ENCODE measurements at regions of chr3 and their contacts with region 1.

Region 1: GRCh38 chr3:15205934-15206661 is at the start of gene CAPN7:
- DNase-seq: peak; percentile 94 to 96 (median 95)
- H3K4me3 ChIP-seq: peak within 1 kb of the TSS; percentile 62
- H3K4me3 Mint-ChIP-seq: peak within 1 kb of the TSS; percentile 86 to 96 (median 93)
- H3K27ac ChIP-seq: peak within 1 kb of the TSS; percentile 93
- H3K27ac Mint-ChIP-seq: peak within 1 kb of the TSS; percentile 91 to 99 (median 96)
- H3K4me1 ChIP-seq: peaks cover 27% of the 10 kb centered on the region
- H3K4me1 Mint-ChIP-seq: peaks cover 38 to 48% (median 47%) of the 10 kb centered on the region in 3 donors
- H3K27me3 ChIP-seq: no peaks in the 10 kb centered on the region
- H3K27me3 Mint-ChIP-seq: peaks cover 0 to 2% of the 10 kb centered on the region in 2 donors
- total RNA-seq, gene CAPN7: 33.1 to 36.1 TPM

Region 2: DNA sequence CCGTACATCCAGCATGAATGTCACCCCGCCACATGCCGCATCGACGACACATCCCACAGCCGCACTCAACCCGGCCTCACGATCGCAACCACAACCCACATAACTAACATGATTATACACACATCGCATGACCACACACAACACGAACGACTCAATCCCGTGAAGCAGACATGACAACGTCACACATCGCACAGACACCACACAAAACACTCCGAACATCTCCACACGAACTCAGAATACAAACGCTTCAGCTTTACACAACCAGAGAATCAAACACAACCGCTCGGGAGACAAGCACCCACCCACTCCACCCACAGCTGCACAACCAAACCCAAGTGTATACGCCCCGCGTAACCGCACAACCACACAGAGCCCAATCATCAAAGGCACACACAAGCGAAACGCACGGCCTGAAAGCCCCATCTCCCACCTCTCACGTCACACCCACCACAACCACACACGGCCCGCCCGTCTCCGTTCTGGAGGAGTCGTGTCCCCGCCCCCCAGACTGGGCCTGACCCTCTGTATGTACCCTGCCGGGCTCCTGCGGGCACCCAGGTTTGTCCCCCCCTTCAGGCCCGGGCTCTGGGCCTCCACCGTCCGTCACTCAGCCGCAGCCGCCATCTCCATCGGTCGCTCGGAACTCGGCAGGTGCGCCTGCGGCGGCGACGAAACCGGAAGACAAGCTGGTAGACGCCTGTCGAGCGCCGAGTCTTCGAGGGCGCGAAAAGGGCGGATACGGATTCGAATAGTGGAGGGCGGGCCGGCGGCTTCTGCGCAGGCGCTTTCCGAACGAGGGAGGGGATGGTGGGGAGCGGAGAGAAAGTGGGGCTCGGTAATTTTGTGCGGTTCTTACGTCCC is 107.4 kb before region 1 on chr3 and contains the start of gene RBSN:
- CTCF ChIA-PET with region 1: no interaction called
- POLR2A ChIA-PET with region 1: interaction called, 11 read pairs
- DNase-seq: peak; percentile 94 to 97 (median 95)
- H3K4me3 ChIP-seq: peak within 1 kb of the TSS; percentile 95
- H3K4me3 Mint-ChIP-seq: peak within 1 kb of the TSS; percentile 91 to 97 (median 95)
- H3K27ac ChIP-seq: peak within 1 kb of the TSS; percentile 98
- H3K27ac Mint-ChIP-seq: peak within 1 kb of the TSS; percentile 91 to 100 (median 98)
- H3K4me1 ChIP-seq: peaks cover 18% of the 10 kb centered on the region
- H3K4me1 Mint-ChIP-seq: peaks cover 23 to 34% (median 30%) of the 10 kb centered on the region in 3 donors
- H3K27me3 ChIP-seq: no peaks in the 10 kb centered on the region
- H3K27me3 Mint-ChIP-seq: peaks cover 4 to 8% of the 10 kb centered on the region in 2 donors
- total RNA-seq, gene RBSN: 12.2 to 12.5 TPM

Region 3: DNA sequence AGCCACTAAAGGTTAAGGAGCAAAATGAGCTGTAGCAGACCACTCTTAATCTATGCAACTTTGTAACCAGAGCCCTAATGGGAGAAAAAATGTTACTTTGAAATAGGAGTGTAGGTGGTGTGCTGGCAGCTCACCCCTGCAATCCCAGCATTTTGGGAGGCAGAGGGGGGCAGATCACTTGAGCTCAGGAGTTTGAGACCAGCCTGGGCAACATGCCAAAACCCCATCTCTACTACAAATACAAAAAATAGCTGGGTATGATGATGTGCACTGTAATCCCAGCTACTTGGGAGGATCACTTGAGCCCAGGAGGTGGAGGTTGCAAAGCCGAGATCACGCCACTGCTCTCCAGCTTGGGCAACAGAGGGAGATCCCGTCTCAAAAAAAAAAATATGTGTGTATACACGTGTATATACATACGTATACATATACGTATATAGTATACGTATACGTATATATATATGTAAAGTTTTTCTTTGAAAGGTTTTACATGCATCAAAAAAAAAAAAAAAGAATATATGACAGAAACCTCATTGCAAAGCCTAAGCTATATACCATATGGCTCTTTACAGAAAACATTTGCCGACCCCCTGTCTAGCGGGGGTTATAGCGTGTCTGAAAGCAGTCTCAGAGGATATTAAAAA is 15.6 kb after region 1 on chr3:
- CTCF ChIA-PET with region 1: interaction called, 10 read pairs
- POLR2A ChIA-PET with region 1: interaction called, 4 read pairs
- DNase-seq: no peak
- H3K4me3 ChIP-seq: no peak overlapping the region
- H3K4me3 Mint-ChIP-seq: no peak overlapping the region
- H3K27ac ChIP-seq: no peak overlapping the region
- H3K27ac Mint-ChIP-seq: no peak overlapping the region
- H3K4me1 ChIP-seq: peaks cover 6% of the 10 kb centered on the region
- H3K4me1 Mint-ChIP-seq: peaks cover 15 to 22% (median 20%) of the 10 kb centered on the region in 3 donors
- H3K27me3 ChIP-seq: no peaks in the 10 kb centered on the region
- H3K27me3 Mint-ChIP-seq: no peaks in the 10 kb centered on the region

Region 4: DNA sequence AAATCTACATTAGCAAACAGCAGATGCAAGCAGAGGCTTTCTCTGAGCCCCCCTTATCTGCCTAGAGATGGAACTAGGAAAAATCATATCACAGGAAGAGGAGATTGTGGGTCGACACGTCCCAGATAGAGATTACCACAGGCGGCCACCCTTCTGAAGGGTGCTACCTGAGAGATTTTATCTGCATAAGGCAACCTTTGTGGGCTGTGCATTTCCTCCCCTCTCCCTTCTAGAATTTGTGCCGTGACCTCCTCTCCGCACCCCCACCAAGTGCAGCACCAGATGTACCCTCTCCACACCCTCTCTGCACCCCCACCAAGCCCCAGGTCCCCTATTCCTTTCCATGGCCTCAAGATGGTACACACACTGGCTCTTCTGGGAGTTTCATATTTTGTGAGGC is 193.9 kb after region 1 on chr3:
- CTCF ChIA-PET with region 1: interaction called, 52 read pairs
- POLR2A ChIA-PET with region 1: interaction called, 3 read pairs
- DNase-seq: peak in 2 of 5 donors; percentile 19 to 45
- H3K4me3 ChIP-seq: no peak overlapping the region
- H3K4me3 Mint-ChIP-seq: peak overlapping the region in 6 of 7 donors; percentile 37 to 90 (median 67)
- H3K27ac ChIP-seq: no peak overlapping the region
- H3K27ac Mint-ChIP-seq: peak overlapping the region in 3 of 8 donors; percentile 15 to 78 (median 43)
- H3K4me1 ChIP-seq: peaks cover 15% of the 10 kb centered on the region
- H3K4me1 Mint-ChIP-seq: peaks cover 27 to 35% (median 31%) of the 10 kb centered on the region in 3 donors
- H3K27me3 ChIP-seq: no peaks in the 10 kb centered on the region
- H3K27me3 Mint-ChIP-seq: no peaks in the 10 kb centered on the region

Region 5: DNA sequence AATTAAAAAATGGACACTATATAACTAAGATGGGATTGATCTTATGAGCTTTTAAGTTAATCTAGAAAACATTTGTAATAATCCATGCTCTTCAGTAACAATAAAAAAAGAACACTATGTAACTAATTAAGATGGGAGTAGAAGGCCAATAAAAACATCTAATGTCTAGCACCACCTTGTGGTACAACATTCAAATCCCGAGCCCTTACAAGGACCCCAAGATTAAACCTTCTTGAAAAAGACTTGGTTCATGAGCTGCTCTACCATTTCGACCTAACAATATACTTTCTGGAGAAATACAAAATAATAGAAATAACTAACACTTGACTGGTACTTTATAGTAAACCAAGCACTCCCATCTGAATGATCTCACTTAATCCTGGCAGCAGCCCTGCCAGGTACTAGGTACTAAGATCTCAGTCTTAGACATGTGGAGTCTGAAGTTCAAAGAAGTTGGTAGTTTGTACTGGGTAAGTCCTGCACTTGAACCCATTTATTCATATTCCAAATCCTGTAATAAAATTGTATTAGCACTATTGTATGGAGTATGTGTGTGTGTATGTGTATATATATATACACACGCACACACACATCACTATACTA is 199.5 kb after region 1 on chr3:
- CTCF ChIA-PET with region 1: interaction called, 52 read pairs
- POLR2A ChIA-PET with region 1: interaction called, 3 read pairs
- DNase-seq: peak in 2 of 5 donors; percentile 45 to 47
- H3K4me3 ChIP-seq: no peak overlapping the region
- H3K4me3 Mint-ChIP-seq: no peak overlapping the region
- H3K27ac ChIP-seq: no peak overlapping the region
- H3K27ac Mint-ChIP-seq: peak overlapping the region in 3 of 8 donors; percentile 11 to 61 (median 29)
- H3K4me1 ChIP-seq: no peaks in the 10 kb centered on the region
- H3K4me1 Mint-ChIP-seq: peaks cover 7 to 18% (median 9%) of the 10 kb centered on the region in 3 donors
- H3K27me3 ChIP-seq: no peaks in the 10 kb centered on the region
- H3K27me3 Mint-ChIP-seq: no peaks in the 10 kb centered on the region

Region 6: DNA sequence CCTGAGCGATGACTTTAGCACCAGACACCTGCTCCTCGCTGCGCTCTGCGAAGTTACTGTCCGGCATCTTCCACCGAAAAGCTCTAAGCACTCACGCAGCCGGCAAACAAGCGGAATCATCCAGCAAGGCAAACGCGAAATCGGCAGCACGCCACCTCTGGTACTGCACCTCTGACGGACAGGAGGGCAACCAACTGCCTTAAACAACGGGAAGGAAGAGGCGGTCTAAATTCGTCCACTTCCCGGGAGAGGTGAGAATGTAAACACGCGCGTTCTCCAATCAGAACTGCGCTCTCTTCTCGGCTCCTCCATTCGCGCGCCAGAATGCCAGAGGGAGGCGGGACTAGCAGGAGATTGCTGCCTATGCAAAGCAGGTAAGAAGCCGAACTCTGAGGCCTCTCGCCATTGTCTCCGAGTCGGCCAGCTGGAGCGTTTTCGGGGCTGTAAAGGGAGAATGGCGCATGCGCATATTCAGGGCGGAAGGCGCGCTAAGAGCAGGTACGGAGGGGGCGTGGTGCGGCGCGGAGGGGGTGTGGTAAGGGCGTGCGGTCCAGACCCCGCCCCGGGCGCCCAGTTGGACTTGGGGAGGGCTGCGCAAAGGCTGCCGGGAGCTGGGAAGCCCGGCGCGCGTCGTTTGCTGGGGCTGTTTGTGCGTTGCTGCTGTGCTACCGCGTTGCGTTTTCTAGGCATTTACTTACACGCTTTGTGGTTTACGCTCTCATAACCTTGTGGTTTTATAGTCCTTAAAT is 395.5 kb after region 1 on chr3 and contains the starts of genes BTD and HACL1:
- CTCF ChIA-PET with region 1: no interaction called
- POLR2A ChIA-PET with region 1: interaction called, 17 read pairs
- DNase-seq: peak; percentile 97 to 99 (median 99)
- H3K4me3 ChIP-seq: peak within 1 kb of the TSS; percentile 96
- H3K4me3 Mint-ChIP-seq: peak within 1 kb of the TSS; percentile 98 to 100 (median 99)
- H3K27ac ChIP-seq: peak within 1 kb of the TSS; percentile 91
- H3K27ac Mint-ChIP-seq: peak within 1 kb of the TSS; percentile 95 to 99 (median 99)
- H3K4me1 ChIP-seq: peaks cover 24% of the 10 kb centered on the region
- H3K4me1 Mint-ChIP-seq: peaks cover 43 to 68% (median 67%) of the 10 kb centered on the region in 3 donors
- H3K27me3 ChIP-seq: no peaks in the 10 kb centered on the region
- H3K27me3 Mint-ChIP-seq: peaks cover 0 to 1% of the 10 kb centered on the region in 2 donors
- total RNA-seq, gene BTD: 5.5 to 6.0 TPM
- total RNA-seq, gene HACL1: 34.6 to 37.7 TPM